ENCODE measurements at regions of chr1 and their contacts with region 1.

Region 1: GRCh38 chr1:35715568-35716002 is 3.1 kb downstream of the C1orf216 start:
- DNase-seq: peak; percentile 47 to 74
- H3K4me3 ChIP-seq: peak overlapping the region in 1 of 2 donors; percentile 17
- H3K27ac ChIP-seq: no peak overlapping the region
- H3K4me1 ChIP-seq: peaks cover 0 to 33% (median 29%) of the 10 kb centered on the region in 4 donors
- H3K27me3 ChIP-seq: peaks cover 0 to 3% of the 10 kb centered on the region in 2 donors
- CTCF ChIP-seq: peak; percentile 53 to 79

Region 2: DNA sequence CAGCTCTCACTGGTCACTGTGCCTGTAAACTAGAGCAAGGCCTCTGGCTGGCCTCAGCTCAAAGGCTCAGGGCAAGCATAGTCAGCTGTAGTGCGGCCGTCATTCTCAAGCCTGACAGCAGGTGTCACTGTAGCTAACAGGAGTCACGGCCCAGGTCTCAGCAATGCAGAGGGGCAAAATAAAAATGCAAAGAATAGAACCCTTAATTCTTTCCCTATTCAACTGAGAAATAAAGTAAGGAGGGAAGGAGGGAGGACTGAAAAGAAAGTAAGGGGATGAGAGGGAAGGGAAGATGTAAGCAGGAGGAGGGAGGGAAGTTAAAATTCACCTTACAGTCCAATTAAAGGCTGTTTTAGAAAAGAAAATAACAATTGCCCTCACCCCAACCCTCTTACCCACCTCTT is 264.5 kb before region 1 on chr1:
- intact Hi-C with region 1: loop called (anchors 5 kb)
- DNase-seq: peak; percentile 81 to 88
- H3K4me3 ChIP-seq: no peak overlapping the region
- H3K27ac ChIP-seq: no peak overlapping the region
- H3K4me1 ChIP-seq: peaks cover 0 to 27% (median 25%) of the 10 kb centered on the region in 4 donors
- H3K27me3 ChIP-seq: no peaks in the 10 kb centered on the region
- CTCF ChIP-seq: peak; percentile 81 to 82

Region 3: DNA sequence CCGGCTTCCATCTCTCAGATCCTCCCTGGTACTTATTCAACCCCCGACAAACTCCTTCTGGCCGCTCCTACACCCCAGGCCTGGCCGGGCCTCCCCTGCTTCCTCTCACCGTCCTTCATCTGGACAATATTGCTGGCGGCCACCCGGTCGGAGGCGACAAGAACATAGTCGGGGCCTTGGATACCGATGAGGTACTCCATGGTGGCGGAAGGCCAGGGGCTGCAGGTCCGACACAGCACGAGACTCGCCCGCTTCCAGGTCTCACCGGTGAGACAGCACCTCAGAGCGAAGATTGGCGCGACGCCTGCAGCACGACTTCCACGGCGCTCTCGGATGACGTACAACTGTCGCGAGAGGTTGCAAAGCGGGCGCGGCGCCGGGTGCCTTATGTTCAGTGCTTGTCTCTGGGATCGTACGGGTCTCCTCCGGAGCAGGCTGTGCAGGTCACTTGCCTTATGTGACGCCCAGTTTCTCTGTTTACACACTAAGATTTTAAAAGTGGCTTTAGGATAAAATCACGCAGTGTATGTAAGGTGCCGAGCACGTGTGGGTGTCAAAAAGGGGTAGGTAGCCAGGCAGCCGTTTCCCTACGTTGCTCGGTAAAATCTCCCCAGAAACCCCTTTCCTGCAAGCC is 74.2 kb before region 1 on chr1 and contains the start of gene PSMB2:
- intact Hi-C with region 1: loop called (anchors 5 kb)
- DNase-seq: peak; percentile 94 to 96
- H3K4me3 ChIP-seq: peak within 1 kb of the TSS; percentile 89 to 92
- H3K27ac ChIP-seq: peak within 1 kb of the TSS; percentile 90 to 93
- H3K4me1 ChIP-seq: peaks cover 0 to 47% (median 33%) of the 10 kb centered on the region in 4 donors
- H3K27me3 ChIP-seq: no peaks in the 10 kb centered on the region
- CTCF ChIP-seq: no peak

Region 4: GRCh38 chr1:35737120-35737519 is 21.5 kb after region 1 on chr1:
- intact Hi-C with region 1: no loop called
- DNase-seq: no peak
- H3K4me3 ChIP-seq: no peak overlapping the region
- H3K27ac ChIP-seq: no peak overlapping the region
- H3K4me1 ChIP-seq: no peaks in the 10 kb centered on the region
- H3K27me3 ChIP-seq: no peaks in the 10 kb centered on the region
- CTCF ChIP-seq: no peak

Region 5: GRCh38 chr1:35769759-35770446 is 54.3 kb after region 1 on chr1 and contains the start of gene CLSPN:
- intact Hi-C with region 1: loop called (anchors 5 kb)
- DNase-seq: peak; percentile 94 to 96
- H3K4me3 ChIP-seq: peak within 1 kb of the TSS; percentile 74 to 90
- H3K27ac ChIP-seq: peak within 1 kb of the TSS; percentile 56 to 72
- H3K4me1 ChIP-seq: no peaks in the 10 kb centered on the region
- H3K27me3 ChIP-seq: no peaks in the 10 kb centered on the region
- CTCF ChIP-seq: no peak

Measured in tibial artery (tissue), 4 donors.